ENCODE measurements at regions of chr17 and their contacts with region 1.

Region 1: DNA sequence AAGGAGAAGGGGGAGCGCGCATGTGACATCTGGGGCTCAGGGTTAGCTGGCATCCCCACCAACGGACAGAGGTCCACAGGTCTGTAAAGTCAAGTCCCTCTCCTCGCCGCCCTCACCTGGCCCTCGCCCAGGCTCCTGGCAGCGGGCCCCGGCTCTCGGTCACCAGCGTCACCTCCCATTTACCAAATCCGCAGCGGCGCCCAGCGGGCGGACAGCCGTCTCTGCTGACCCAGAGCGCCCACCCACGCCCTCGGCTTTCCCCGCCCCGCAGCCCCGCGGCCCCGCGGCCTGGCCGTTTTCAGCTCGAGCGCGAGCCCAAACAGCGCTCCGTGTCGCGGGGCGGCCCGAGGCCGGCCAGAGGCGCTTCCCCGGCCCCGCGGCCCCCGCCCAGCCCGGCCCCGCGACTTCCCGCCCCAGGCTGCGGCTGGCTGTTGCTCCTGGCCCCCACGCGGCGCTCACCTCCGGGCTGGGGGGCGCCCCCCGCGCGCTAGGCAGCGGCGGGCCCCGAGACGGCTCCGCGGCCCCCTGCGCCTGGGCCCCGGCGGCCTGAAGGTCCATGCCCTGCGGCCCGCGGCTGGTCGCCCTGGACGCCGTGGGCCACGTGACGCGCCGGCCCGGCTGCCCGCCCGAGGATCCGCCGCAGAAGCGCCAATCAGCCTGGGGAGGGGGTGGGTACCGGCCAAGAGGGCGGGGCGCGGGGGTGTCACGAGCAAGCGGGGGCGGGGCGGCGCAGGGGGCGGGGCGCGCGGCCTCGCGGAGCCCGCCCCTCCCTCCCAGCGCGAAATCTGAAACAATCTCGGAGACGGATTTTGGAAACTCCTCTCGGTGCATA is at the start of gene COPRS:
- DNase-seq: peak; percentile 75
- ATAC-seq: peak; percentile 91
- H3K4me3 Mint-ChIP-seq: peak within 1 kb of the TSS; percentile 91
- H3K27ac Mint-ChIP-seq: peak within 1 kb of the TSS; percentile 74
- H3K4me1 Mint-ChIP-seq: peaks cover 21% of the 10 kb centered on the region
- H3K27me3 Mint-ChIP-seq: no peaks in the 10 kb centered on the region
- CTCF ChIP-seq: no peak
- total RNA-seq, gene COPRS: 27.0 and 28.8 TPM in 2 replicates

Region 2: GRCh38 chr17:31900877-31901276 is 42.0 kb after region 1 on chr17:
- CTCF ChIA-PET with region 1: no interaction called
- POLR2A ChIA-PET with region 1: interaction called, 3 read pairs
- intact Hi-C with region 1: loop called (anchors 1 kb)
- DNase-seq: no peak
- ATAC-seq: no peak
- H3K4me3 Mint-ChIP-seq: no peak overlapping the region
- H3K27ac Mint-ChIP-seq: no peak overlapping the region
- H3K4me1 Mint-ChIP-seq: peaks cover 11% of the 10 kb centered on the region
- H3K27me3 Mint-ChIP-seq: no peaks in the 10 kb centered on the region
- CTCF ChIP-seq: no peak

Region 3: GRCh38 chr17:31931756-31932155 is 72.9 kb after region 1 on chr17:
- CTCF ChIA-PET with region 1: no interaction called
- POLR2A ChIA-PET with region 1: no interaction called
- intact Hi-C with region 1: loop called (anchors 2 kb)
- DNase-seq: no peak
- ATAC-seq: no peak
- H3K4me3 Mint-ChIP-seq: no peak overlapping the region
- H3K27ac Mint-ChIP-seq: no peak overlapping the region
- H3K4me1 Mint-ChIP-seq: no peaks in the 10 kb centered on the region
- H3K27me3 Mint-ChIP-seq: no peaks in the 10 kb centered on the region
- CTCF ChIP-seq: no peak

Region 4: GRCh38 chr17:32006957-32007462 is 148.2 kb after region 1 on chr17 and contains the start of gene LRRC37B:
- CTCF ChIA-PET with region 1: no interaction called
- POLR2A ChIA-PET with region 1: no interaction called
- intact Hi-C with region 1: loop called (anchors 1 kb)
- DNase-seq: peak; percentile 92
- ATAC-seq: peak; percentile 94
- H3K4me3 Mint-ChIP-seq: peak within 1 kb of the TSS; percentile 84
- H3K27ac Mint-ChIP-seq: peak within 1 kb of the TSS; percentile 67
- H3K4me1 Mint-ChIP-seq: peaks cover 34% of the 10 kb centered on the region
- H3K27me3 Mint-ChIP-seq: no peaks in the 10 kb centered on the region
- CTCF ChIP-seq: peak; percentile 45
- total RNA-seq, gene LRRC37B: 13.8 and 19.5 TPM in 2 replicates

Measured in activated B cell treated with CpG ODN at 0.5 μM for 24 hours (primary cell).